Prostate gland (tissue), 2 donors: ENCODE measurements at regions of chr6 and their contacts with region 1.

Region 1: DNA sequence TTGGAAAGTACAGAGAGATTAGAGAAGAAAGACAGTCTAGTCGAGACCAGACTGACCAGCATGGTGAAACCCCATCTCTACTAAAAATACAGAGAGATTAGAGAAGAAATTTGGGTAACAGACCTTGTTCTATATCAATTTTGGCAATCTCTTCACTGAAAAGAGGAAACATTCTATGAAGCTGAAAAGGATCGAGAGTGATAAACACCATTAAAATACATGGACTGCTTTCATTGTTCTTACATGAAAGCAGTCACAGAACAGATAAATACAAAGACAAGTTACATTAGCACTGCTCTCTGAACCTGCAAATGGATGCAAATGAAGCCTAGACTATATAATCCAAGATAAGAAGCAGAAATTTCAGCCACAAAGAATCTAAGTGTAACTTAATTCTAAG is 8.4 kb upstream of the OPRM1 start:
- DNase-seq: no peak
- H3K4me3 ChIP-seq: no peak overlapping the region
- H3K27ac ChIP-seq: no peak overlapping the region
- H3K4me1 ChIP-seq: no peaks in the 10 kb centered on the region
- H3K27me3 ChIP-seq: no peaks in the 10 kb centered on the region
- CTCF ChIP-seq: no peak
- POLR2A ChIP-seq: no peak

Region 2: GRCh38 chr6:154053141-154053540 is 22.5 kb after region 1 on chr6:
- intact Hi-C with region 1: loop called (anchors 2 kb)
- DNase-seq: no peak
- H3K4me3 ChIP-seq: no peak overlapping the region
- H3K27ac ChIP-seq: no peak overlapping the region
- H3K4me1 ChIP-seq: no peaks in the 10 kb centered on the region
- H3K27me3 ChIP-seq: no peaks in the 10 kb centered on the region
- CTCF ChIP-seq: no peak
- POLR2A ChIP-seq: no peak